Psoas muscle (tissue), 8 donors: ENCODE measurements at regions of chr7 and their contacts with region 1.

Region 1: GRCh38 chr7:53397911-53398310 is 362.5 kb downstream of the POM121L12 start:
- DNase-seq: no peak
- ATAC-seq: no peak
- H3K4me3 ChIP-seq: no peak overlapping the region
- H3K27ac ChIP-seq: no peak overlapping the region
- H3K4me1 ChIP-seq: no peaks in the 10 kb centered on the region
- H3K27me3 ChIP-seq: no peaks in the 10 kb centered on the region
- CTCF ChIP-seq: no peak

Region 2: GRCh38 chr7:53237344-53237913 is 160.5 kb before region 1 on chr7:
- intact Hi-C with region 1: loop called in 1 of 2 experiments (anchors 10 kb)
- DNase-seq: no peak
- ATAC-seq: no peak
- H3K4me3 ChIP-seq: no peak overlapping the region
- H3K27ac ChIP-seq: no peak overlapping the region
- H3K4me1 ChIP-seq: no peaks in the 10 kb centered on the region
- H3K27me3 ChIP-seq: no peaks in the 10 kb centered on the region
- CTCF ChIP-seq: no peak

Region 3: GRCh38 chr7:53281305-53281704 is 116.6 kb before region 1 on chr7:
- intact Hi-C with region 1: no loop called
- DNase-seq: no peak
- ATAC-seq: no peak
- H3K4me3 ChIP-seq: no peak overlapping the region
- H3K27ac ChIP-seq: no peak overlapping the region
- H3K4me1 ChIP-seq: no peaks in the 10 kb centered on the region
- H3K27me3 ChIP-seq: no peaks in the 10 kb centered on the region
- CTCF ChIP-seq: no peak

Region 4: DNA sequence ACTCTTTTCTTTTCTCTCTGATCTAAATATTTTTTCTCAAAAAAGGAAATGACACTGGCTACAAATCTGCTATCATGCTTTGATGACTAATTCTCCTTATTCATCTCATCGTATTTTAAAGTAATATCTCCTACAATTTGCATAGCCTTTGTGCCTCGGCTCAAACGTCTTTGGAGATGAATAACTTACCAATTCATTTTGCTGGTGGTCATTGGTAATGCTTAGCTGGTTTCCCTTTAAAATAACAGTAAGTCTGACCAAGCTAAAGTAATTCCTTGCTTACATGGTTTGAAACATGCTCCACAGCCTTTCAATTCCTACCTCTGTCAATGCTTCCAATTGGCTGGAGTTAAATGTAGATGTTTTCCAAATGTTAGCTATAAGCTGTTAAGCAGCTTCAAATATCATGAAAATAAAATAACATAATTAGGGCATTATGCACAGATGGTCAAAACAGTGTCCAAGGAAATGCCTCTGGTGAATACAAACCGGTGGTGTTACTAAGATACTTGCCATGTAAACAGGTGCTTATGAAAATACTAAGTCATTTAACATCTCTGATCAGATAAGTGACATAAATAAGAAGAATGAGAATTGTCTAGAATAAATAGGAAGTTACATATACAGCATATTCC is 72.5 kb after region 1 on chr7:
- intact Hi-C with region 1: no loop called
- DNase-seq: no peak
- ATAC-seq: no peak
- H3K4me3 ChIP-seq: no peak overlapping the region
- H3K27ac ChIP-seq: no peak overlapping the region
- H3K4me1 ChIP-seq: no peaks in the 10 kb centered on the region
- H3K27me3 ChIP-seq: no peaks in the 10 kb centered on the region
- CTCF ChIP-seq: no peak

Region 5: GRCh38 chr7:53500076-53500475 is 102.2 kb after region 1 on chr7:
- intact Hi-C with region 1: no loop called
- DNase-seq: no peak
- ATAC-seq: no peak
- H3K4me3 ChIP-seq: no peak overlapping the region
- H3K27ac ChIP-seq: no peak overlapping the region
- H3K4me1 ChIP-seq: no peaks in the 10 kb centered on the region
- H3K27me3 ChIP-seq: no peaks in the 10 kb centered on the region
- CTCF ChIP-seq: no peak